ENCODE measurements at regions of chrX and their contacts with region 1.

Region 1: GRCh38 chrX:99301990-99302389 is 1108.1 kb downstream of the PCDH19 start:
- DNase-seq: no peak
- H3K4me3 ChIP-seq: no peak overlapping the region
- H3K27ac ChIP-seq: no peak overlapping the region
- H3K27me3 ChIP-seq: peaks cover 0 to 71% (median 17%) of the 10 kb centered on the region in 45 donors
- CTCF ChIP-seq: peak in 13 of 56 donors; percentile 13 to 29 (median 21)

Region 2: DNA sequence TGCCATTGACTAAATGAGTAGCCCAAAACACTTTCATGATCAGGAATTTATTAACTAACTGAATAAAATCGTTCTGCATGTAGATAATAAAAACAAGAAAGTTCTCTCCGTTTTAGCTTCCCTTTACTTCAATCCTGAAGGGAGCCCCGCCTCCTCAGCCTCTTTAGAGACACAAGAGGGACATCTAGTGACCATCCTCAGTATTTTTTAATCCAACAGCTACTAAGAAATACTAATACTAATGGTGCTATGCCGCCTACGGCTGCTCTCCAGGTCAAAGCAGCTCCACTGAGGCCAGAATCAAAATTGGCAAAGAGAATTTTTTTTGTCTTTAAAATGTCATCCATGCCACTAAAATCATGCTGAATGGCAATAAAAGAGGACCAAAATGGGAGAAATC is 1111.2 kb after region 1 on chrX:
- intact Hi-C with region 1: loop called in 1 of 2 experiments (anchors 10 kb)
- DNase-seq: peak in 1 of 10 donors; percentile 48
- H3K4me3 ChIP-seq: peak overlapping the region in 26 of 59 donors; percentile 3 to 69 (median 28)
- H3K27ac ChIP-seq: no peak overlapping the region
- H3K27me3 ChIP-seq: peaks cover 0 to 86% (median 28%) of the 10 kb centered on the region in 45 donors
- CTCF ChIP-seq: peak in 55 of 56 donors; percentile 35 to 78 (median 60)